ENCODE measurements at regions of chr4 and their contacts with region 1.

Region 1: GRCh38 chr4:87926554-87927098 is 48.9 kb upstream of the SPP1 start:
- DNase-seq: no peak
- H3K4me3 Mint-ChIP-seq: no peak overlapping the region
- H3K27ac Mint-ChIP-seq: no peak overlapping the region
- H3K4me1 Mint-ChIP-seq: no peaks in the 10 kb centered on the region
- H3K27me3 Mint-ChIP-seq: no peaks in the 10 kb centered on the region
- CTCF ChIP-seq: no peak

Region 2: GRCh38 chr4:87938746-87939145 is 12.1 kb after region 1 on chr4:
- CTCF ChIA-PET with region 1: no interaction called
- POLR2A ChIA-PET with region 1: interaction called, 4 read pairs
- intact Hi-C with region 1: loop called (anchors 1 kb)
- DNase-seq: no peak
- H3K4me3 Mint-ChIP-seq: no peak overlapping the region
- H3K27ac Mint-ChIP-seq: no peak overlapping the region
- H3K4me1 Mint-ChIP-seq: no peaks in the 10 kb centered on the region
- H3K27me3 Mint-ChIP-seq: no peaks in the 10 kb centered on the region
- CTCF ChIP-seq: no peak

Region 3: DNA sequence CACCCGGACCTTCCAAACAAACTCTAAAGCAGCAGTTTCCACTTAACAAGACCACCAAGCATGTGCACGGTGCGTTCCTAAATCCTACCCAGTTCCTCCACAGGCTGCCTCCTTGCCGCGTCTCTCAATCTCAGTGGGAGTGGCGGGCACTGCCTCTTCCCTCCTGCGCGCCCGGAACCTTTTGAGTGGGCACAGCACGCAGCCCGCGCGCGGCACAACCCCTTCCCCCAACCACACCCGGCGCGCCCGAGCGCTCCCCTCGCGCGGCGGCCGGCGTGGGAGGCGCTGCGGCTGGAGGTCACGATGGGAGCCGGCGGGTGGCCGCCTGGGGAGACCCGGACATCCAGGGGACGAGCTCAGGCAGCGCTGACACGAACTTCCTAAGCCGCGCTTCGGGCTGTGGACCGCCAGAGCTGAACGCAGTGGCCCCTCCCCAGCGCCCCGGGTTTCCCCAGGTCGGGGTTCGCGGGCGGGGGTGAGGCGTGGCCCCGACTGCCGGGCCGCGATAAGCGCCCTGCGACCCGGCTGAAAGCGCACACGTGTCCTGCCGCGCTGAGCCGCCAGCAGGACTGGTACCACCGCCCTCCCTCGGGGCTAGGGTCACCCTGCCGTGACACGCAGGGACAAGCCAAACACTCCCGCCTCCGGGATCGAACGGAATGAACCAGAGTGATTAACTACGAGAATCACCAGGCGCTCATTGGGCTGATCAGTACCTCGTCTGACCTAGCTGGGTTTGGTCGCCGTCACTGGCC is 232.0 kb after region 1 on chr4 and contains the start of gene ABCG2:
- CTCF ChIA-PET with region 1: no interaction called
- POLR2A ChIA-PET with region 1: no interaction called
- intact Hi-C with region 1: no loop called
- DNase-seq: peak; percentile 27
- H3K4me3 Mint-ChIP-seq: peak within 1 kb of the TSS; percentile 47
- H3K27ac Mint-ChIP-seq: no peak within 1 kb of the TSS
- H3K4me1 Mint-ChIP-seq: no peaks in the 10 kb centered on the region
- H3K27me3 Mint-ChIP-seq: no peaks in the 10 kb centered on the region
- CTCF ChIP-seq: no peak
- total RNA-seq, gene ABCG2: 0.07 and 0.12 TPM in 2 replicates